Activated CD8-positive, alpha-beta T cell treated with anti-CD3 and anti-CD28 coated beads, Interleukin-2, amount 10 ng/mL, durations not matched to agents 7 days and 5 days (primary cell): ENCODE measurements at regions of chr1 and their contacts with region 1.

Region 1: DNA sequence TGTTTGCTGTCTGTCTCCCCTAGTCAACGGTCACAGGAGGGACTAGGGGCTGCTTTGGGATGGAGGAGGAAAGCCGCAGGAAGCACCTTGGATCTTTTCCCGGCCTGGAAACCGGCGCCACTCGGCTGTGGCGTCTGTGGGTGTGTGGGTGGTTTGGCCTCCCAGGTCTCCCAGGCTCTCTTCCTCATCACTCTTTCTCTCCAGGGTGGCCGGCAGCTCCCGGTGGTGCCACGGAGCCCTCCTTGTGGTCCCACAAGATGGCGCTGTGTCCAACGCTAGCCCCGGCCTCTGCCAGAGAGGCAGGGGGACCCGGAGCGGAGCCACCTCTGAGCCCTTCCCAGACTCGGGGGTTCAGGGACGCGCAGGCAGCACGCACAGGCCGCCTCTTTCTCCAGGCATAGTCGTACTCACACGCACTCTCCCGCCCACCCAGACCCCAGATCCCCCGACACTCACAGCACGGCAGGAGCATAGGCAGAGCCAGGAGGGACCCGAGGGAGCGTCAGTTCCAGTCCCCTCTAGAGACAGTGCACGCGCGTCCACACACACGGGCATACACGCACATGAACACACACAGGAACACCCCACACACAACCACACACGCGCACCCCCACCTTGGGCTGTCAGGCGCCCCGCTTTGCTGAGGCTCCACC is 31.2 kb downstream of the CDCP2 start:
- DNase-seq: peak; percentile 79
- ATAC-seq: peak; percentile 92
- H3K4me3 Mint-ChIP-seq: no peak overlapping the region
- H3K27ac Mint-ChIP-seq: no peak overlapping the region
- H3K4me1 Mint-ChIP-seq: peaks cover 6% of the 10 kb centered on the region
- H3K27me3 Mint-ChIP-seq: peaks cover 5% of the 10 kb centered on the region

Region 2: DNA sequence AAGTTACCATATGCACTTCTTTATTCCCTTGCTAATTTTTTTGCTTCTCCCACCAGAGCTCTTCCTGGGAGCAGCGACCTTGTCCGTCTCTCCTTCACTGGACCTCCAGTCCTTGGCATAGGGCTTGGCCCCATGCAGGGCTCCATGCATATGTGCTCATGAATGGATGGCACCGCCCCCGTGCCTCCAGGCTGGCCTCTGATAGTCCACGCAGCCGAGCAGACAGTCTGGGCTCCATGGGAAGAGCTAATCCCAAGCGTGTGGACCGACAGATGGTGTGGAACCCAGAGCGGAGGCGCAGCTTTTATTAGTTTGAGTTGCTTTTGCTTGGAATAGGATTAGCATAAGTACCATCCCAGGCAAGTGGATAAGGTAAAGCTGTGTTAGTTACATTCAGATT is 10.6 kb before region 1 on chr1:
- CTCF ChIA-PET with region 1: interaction called, 11 read pairs
- POLR2A ChIA-PET with region 1: no interaction called
- DNase-seq: no peak
- ATAC-seq: no peak
- H3K4me3 Mint-ChIP-seq: no peak overlapping the region
- H3K27ac Mint-ChIP-seq: no peak overlapping the region
- H3K4me1 Mint-ChIP-seq: no peaks in the 10 kb centered on the region
- H3K27me3 Mint-ChIP-seq: peaks cover 3% of the 10 kb centered on the region